Breast epithelium (tissue), 4 donors: ENCODE measurements at regions of chrX and their contacts with region 1.

Region 1: GRCh38 chrX:24097741-24098260 is 43.0 kb downstream of the EIF2S3 start:
- DNase-seq: no peak
- H3K4me3 ChIP-seq: no peak overlapping the region
- H3K27ac ChIP-seq: no peak overlapping the region
- H3K4me1 ChIP-seq: no peaks in the 10 kb centered on the region
- H3K27me3 ChIP-seq: no peaks in the 10 kb centered on the region
- CTCF ChIP-seq: no peak
- POLR2A ChIP-seq: no peak

Region 2: GRCh38 chrX:24014388-24015018 is 83.3 kb before region 1 on chrX:
- intact Hi-C with region 1: no loop called
- DNase-seq: no peak
- H3K4me3 ChIP-seq: no peak overlapping the region
- H3K27ac ChIP-seq: no peak overlapping the region
- H3K4me1 ChIP-seq: no peaks in the 10 kb centered on the region
- H3K27me3 ChIP-seq: peaks cover 0 to 46% of the 10 kb centered on the region in 2 donors
- CTCF ChIP-seq: no peak
- POLR2A ChIP-seq: no peak

Region 3: GRCh38 chrX:24479924-24480323 is 382.1 kb after region 1 on chrX:
- intact Hi-C with region 1: no loop called
- DNase-seq: peak in 1 of 2 donors; percentile 26
- H3K4me3 ChIP-seq: peak overlapping the region in 2 of 3 donors; percentile 3 to 43
- H3K27ac ChIP-seq: peak overlapping the region; percentile 50 to 68
- H3K4me1 ChIP-seq: no peaks in the 10 kb centered on the region
- H3K27me3 ChIP-seq: peaks cover 0 to 12% of the 10 kb centered on the region in 2 donors
- CTCF ChIP-seq: no peak
- POLR2A ChIP-seq: no peak

Region 4: DNA sequence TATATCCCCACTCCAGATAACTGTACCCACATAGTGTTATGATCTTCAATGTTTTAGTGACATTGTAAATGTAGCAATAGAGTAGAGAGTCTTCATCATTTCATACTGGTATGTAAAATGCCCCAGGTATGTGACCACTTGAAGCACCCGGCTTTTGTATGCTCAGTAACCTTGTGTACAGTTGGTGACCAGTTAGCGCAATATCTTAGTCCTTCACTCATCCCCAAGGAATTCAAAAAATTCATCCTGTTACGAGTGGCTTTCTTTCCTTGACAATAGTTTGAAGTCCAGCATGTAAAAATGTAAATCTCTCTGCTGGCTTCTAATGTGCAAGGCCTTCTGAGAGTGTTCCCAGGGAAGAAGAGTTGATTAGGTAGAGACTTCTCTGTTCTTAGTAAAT is 772.3 kb after region 1 on chrX:
- intact Hi-C with region 1: no loop called
- DNase-seq: no peak
- H3K4me3 ChIP-seq: no peak overlapping the region
- H3K27ac ChIP-seq: no peak overlapping the region
- H3K4me1 ChIP-seq: no peaks in the 10 kb centered on the region
- H3K27me3 ChIP-seq: peaks cover 0 to 11% of the 10 kb centered on the region in 2 donors
- CTCF ChIP-seq: no peak
- POLR2A ChIP-seq: no peak

Region 5: DNA sequence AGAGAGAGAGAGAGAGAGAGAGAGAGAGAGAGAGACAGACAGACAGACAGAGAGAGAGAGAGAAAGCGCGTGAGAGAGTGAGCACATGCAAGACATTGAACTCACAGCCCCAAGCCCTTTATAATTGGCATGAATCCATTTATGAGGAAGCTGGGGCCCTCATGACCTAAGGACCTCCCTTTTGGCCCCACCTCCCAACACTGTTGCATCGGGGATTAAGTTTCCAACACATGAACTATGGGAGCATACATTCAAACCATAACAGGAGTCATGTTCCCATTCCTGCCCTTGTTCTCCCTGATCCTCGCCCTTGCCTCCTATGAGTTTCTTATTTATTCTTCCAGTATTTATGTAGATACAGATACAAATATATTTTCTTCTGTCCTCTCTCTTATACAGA is 1187.8 kb after region 1 on chrX:
- intact Hi-C with region 1: loop called (anchors 10 kb)
- DNase-seq: no peak
- H3K4me3 ChIP-seq: no peak overlapping the region
- H3K27ac ChIP-seq: no peak overlapping the region
- H3K4me1 ChIP-seq: no peaks in the 10 kb centered on the region
- H3K27me3 ChIP-seq: peaks cover 0 to 4% of the 10 kb centered on the region in 2 donors
- CTCF ChIP-seq: no peak
- POLR2A ChIP-seq: no peak